Gastrocnemius medialis (tissue), 4 donors: ENCODE measurements at regions of chr1 and their contacts with region 1.

Region 1: GRCh38 chr1:21324368-21325141 is 34.3 kb upstream of the ECE1 start:
- DNase-seq: peak; percentile 66 to 74
- ATAC-seq: peak; percentile 73
- H3K4me3 ChIP-seq: no peak overlapping the region
- H3K27ac ChIP-seq: peak overlapping the region; percentile 76 to 82 (median 80)
- H3K4me1 ChIP-seq: peaks cover 33 to 57% of the 10 kb centered on the region in 2 donors
- H3K27me3 ChIP-seq: no peaks in the 10 kb centered on the region
- CTCF ChIP-seq: no peak
- POLR2A ChIP-seq: no peak

Region 2: DNA sequence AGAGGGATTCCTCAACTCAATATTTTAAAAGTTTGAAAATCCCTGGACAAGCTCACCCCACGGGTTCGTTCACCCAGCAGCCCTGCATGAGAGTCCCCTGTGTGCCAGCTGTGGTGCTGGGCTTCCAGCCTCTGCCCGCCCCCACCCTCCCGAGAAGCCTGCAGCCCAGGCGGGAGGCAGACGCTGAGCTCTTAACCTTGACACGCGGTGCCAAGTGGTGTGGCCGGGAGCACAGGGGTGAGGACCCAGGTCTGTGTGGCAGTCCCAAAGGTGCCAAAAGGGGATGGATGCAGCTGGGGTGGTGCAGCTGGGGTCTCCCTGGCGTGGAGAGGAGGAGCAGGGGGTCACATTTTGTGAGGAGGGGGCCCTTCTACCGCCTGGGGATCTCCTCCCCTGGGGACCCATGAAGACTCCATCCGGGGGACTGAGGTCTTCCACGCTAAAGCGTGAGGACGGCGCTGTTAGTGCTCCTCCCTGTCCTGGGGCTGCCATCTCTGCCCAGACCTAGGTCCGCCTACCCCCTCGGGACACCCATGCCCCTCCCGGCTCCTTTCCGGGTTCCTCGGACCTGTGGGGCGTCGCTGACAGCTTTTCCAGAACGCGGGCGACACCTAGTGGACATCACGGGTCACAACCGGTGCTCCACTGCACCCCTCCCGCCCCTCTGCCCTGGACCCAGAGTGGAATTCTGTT is 1172.5 kb before region 1 on chr1:
- in situ Hi-C with region 1: no loop called
- intact Hi-C with region 1: no loop called
- DNase-seq: peak; percentile 52 to 58
- ATAC-seq: peak; percentile 81 to 82
- H3K4me3 ChIP-seq: peak overlapping the region in 3 of 4 donors; percentile 32 to 50 (median 41)
- H3K27ac ChIP-seq: peak overlapping the region in 1 of 4 donors; percentile 52
- H3K4me1 ChIP-seq: peaks cover 3 to 4% of the 10 kb centered on the region in 2 donors
- H3K27me3 ChIP-seq: no peaks in the 10 kb centered on the region
- CTCF ChIP-seq: peak; percentile 86 to 95 (median 92)
- POLR2A ChIP-seq: no peak

Region 3: DNA sequence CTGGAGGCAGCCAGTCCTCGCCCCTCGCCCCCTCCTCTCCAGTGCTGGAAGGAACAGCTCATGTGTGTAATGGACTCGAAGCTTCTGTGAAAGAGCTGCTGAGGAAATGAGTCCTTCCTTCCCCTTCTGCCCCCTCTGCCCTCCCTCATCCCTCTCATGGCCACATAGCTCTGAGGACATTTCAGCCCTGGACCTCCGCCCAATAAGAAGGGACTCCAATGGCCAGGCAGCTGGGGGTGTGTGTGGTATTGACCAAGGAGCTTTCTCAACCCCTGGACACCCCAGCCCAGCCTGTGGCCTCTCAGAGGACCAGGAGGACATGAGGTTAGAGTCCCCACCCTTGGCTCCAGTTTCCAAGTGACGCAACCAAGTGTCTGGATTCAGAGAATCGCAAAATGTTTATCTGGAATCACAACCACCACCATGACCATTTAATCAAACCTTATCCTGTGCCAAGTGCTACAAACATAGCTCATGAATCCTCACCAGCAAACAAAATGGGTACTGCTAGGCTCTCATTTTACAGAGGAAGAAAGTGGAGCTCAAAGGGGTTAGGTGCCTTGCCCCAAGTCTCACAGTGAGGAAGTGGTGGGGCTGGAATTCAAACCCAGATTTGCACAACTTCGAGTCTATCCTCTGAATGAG is 13.5 kb after region 1 on chr1:
- in situ Hi-C with region 1: no loop called
- intact Hi-C with region 1: loop called (anchors 2 kb)
- DNase-seq: peak; percentile 87 to 94
- ATAC-seq: peak; percentile 61 to 64
- H3K4me3 ChIP-seq: no peak overlapping the region
- H3K27ac ChIP-seq: peak overlapping the region; percentile 67 to 89 (median 76)
- H3K4me1 ChIP-seq: peaks cover 41 to 72% of the 10 kb centered on the region in 2 donors
- H3K27me3 ChIP-seq: no peaks in the 10 kb centered on the region
- CTCF ChIP-seq: no peak
- POLR2A ChIP-seq: peak in 1 of 2 donors; percentile 30